ENCODE measurements at regions of chr1 and their contacts with region 1.

Region 1: GRCh38 chr1:41613689-41614574 is 129.4 kb upstream of the EDN2 start:
- DNase-seq: no peak
- H3K4me3 Mint-ChIP-seq: no peak overlapping the region
- H3K27ac Mint-ChIP-seq: no peak overlapping the region
- H3K4me1 Mint-ChIP-seq: peaks cover 47% of the 10 kb centered on the region
- H3K27me3 Mint-ChIP-seq: no peaks in the 10 kb centered on the region

Region 2: GRCh38 chr1:41599912-41600311 is 14.0 kb before region 1 on chr1:
- intact Hi-C with region 1: loop called (anchors 2 kb)
- DNase-seq: no peak
- H3K4me3 Mint-ChIP-seq: no peak overlapping the region
- H3K27ac Mint-ChIP-seq: peak overlapping the region; percentile 50
- H3K4me1 Mint-ChIP-seq: peaks cover 50% of the 10 kb centered on the region
- H3K27me3 Mint-ChIP-seq: no peaks in the 10 kb centered on the region

Region 3: DNA sequence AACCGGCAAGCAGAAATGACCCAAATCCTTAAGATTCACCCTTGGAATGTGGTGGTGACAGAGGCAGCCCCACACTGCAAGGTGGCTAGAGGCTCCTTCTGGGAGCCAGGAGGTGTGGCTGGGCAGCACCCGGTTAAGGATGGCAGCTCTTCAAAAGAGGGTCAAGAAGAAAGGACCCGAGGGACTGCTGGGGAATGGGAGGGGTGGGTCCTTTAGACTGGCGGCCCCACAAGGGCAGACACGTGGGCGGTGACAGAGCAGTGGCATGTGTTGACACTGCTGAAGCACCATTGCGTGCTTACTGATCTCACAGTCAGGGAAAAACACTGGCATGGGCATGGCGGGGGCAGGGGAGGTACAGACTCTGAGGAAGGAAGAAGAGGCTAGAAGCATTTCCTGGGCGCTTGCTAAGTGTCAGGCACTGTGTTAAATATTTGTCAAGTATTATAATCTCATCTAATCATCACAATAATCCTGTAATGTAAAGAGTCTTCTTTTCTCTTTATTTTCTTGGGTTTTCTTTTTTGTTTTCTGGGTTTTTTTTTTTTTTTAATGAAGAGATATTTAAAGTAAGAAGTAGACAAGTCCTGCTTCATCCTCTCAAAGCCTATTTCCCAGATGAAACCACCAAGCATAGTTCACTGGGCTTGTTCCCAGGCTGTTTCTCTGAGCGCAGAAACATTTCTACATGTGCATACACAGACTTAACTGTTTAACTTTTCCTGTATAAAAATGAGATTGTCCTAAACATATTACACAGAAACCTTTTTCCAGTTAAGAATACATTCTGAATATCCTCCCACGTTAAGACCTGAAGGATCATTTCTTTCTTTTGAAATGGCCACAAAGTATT is 36.3 kb after region 1 on chr1:
- intact Hi-C with region 1: no loop called
- DNase-seq: no peak
- H3K4me3 Mint-ChIP-seq: no peak overlapping the region
- H3K27ac Mint-ChIP-seq: peak overlapping the region; percentile 76
- H3K4me1 Mint-ChIP-seq: peaks cover 87% of the 10 kb centered on the region
- H3K27me3 Mint-ChIP-seq: no peaks in the 10 kb centered on the region

Region 4: GRCh38 chr1:41662061-41662764 is 48.3 kb after region 1 on chr1:
- intact Hi-C with region 1: no loop called
- DNase-seq: peak; percentile 73
- H3K4me3 Mint-ChIP-seq: peak overlapping the region; percentile 70
- H3K27ac Mint-ChIP-seq: peak overlapping the region; percentile 65
- H3K4me1 Mint-ChIP-seq: peaks cover 83% of the 10 kb centered on the region
- H3K27me3 Mint-ChIP-seq: no peaks in the 10 kb centered on the region

Measured in activated T-helper 1 cell treated with anti-CD3 and anti-CD28 coated beads, Interleukin-12 subunit alpha, Interleukin-12 subunit beta, Interleukin-2, Interleukin-4 antibody, amounts not matched to agents 30 ng/mL and 10 ng/mL and 1 ng/mL, durations not matched to agents 14 hours and 24 hours and 36 hours (primary cell).